Posterior cingulate gyrus (tissue), 11 donors: ENCODE measurements at regions of chr12 and their contacts with region 1.

Region 1: DNA sequence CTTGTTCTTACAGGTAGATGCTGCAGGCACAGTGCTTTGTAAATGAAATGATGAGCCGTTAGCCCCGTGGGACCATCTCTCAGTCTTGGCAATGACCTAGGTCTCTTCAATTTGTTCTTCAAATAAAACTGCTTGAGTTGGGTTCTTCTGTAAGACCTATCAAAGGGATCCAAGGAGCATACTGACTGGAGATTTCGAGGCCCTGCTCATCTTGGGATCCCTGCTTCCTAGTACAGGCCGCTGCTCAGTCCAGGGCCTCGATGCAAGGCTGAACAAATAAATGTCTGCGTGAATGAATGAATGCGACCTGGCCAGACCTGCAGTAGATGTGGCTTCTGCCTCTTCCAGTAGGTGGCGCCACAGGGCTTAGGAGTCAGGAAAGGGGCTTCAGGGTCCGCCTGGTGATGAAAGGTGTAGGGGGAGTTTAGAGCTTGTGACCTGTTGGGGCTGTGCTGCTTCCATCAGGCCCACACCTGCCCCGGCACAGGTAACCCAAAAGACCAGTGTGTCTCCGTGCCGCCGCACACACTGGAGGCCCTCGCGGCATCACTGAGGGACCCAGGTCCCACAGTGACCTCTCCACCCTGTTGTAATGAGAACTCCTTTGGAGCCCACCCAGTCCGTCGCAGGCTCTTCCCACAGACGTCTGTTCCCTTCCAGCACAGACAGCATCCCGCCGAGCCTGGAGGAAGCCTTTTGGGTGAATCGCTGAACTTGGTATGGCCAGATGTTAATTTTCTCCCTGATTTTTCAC is 4.4 kb downstream of the CACNA1C start:
- DNase-seq: peak in 9 of 10 donors; percentile 46 to 92 (median 66)

Region 2: DNA sequence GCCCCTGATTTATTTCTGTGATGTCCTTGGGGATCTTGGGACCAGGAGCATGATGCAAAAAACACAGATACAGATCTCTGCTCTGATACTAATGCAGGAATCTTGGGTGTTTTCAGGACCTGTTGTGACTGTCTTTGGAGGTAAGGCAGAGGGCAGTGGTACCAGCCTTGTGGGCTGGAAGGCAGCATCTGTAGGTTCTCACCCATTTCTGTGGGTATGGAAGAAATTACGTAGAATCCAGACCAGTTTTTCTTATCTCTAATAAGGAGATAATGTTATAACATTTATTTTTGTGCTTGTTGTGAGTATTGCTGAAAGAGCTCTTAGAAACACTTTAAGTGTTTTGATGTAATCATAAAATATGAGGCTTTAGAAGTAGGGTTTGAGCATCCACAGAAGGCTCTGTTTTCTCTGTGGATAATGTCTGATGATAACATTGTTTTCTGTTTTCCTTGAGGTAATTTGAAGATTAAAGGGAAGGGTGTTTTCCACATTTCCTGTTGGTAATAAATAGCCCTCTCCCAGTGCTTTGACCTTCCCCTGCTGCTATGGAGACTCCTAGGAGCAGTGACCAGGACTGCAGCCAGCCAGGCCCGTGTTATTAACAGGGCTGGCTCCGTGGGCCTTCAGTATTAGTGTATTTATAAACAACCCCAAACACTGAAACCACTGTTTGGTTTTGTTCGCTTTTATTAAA is 43.5 kb before region 1 on chr12:
- intact Hi-C with region 1: no loop called
- DNase-seq: peak in 2 of 10 donors; percentile 14 to 17

Region 3: DNA sequence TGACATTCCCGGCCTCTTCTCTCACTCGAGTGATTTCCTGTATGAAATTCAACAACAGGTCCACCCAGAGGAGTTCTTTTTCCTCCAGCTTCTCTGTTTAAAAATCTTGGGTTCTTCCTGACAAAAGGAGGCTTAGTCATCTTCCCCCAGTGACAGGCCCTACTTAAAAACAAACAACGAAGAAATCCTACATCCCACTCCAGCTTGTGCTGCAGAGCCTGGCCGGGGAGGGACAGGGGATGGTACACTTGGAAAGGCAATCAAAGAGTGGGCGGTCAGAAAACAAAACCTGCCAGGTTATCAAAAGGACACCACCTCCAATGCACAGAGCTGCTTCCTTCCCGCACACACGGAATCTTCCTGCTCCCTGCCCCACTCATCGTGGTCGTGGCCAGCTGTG is 96.8 kb after region 1 on chr12:
- intact Hi-C with region 1: loop called (anchors 10 kb)
- DNase-seq: peak in 1 of 10 donors; percentile 88

Region 4: DNA sequence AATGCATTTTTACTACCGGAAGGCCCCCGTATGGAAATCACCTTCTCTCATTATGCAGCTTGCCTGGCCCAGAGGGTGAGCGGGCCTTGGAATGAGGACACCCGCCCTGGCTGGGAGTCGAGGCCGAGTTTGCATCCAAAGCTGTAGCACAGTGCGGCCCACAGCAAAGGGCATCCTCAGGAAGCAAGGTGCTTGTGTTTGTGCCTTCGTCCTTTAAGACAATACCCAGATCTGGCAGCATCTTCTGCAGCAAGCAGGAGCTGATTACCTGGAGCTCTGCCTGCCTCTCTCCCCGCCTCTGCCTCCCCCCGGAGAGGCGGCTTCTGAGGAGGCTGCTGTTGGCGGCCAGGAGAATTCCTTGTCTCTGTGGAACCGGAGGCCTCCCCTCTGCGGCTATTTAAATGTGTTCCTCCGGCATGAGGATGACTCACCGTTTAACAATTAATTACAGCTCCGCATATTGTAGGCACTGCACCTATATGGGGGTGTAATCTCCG is 140.8 kb after region 1 on chr12:
- intact Hi-C with region 1: no loop called
- DNase-seq: peak in 8 of 10 donors; percentile 39 to 93 (median 57)

Region 5: DNA sequence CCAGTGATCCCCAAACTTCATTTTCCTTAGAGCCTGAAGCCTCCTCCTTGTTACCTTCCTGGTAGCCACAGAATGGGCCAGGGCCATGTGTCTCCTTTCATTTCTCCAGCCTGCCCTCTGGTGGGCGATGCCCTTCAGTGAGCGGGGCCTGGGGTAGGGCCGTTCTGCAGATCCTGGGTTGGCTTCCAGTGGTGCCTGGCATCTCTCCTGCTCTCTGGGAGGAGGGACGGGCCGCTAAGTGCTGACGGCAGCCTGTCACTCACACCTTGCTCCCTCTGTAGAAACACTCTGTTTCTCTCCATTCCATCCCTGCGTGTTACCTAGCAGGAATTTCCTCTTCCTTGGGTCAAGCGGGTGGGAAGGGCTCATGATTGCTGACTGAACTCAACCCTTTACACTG is 227.6 kb after region 1 on chr12:
- intact Hi-C with region 1: loop called (anchors 5 kb)
- DNase-seq: peak in 9 of 10 donors; percentile 48 to 93 (median 68)

Region 6: DNA sequence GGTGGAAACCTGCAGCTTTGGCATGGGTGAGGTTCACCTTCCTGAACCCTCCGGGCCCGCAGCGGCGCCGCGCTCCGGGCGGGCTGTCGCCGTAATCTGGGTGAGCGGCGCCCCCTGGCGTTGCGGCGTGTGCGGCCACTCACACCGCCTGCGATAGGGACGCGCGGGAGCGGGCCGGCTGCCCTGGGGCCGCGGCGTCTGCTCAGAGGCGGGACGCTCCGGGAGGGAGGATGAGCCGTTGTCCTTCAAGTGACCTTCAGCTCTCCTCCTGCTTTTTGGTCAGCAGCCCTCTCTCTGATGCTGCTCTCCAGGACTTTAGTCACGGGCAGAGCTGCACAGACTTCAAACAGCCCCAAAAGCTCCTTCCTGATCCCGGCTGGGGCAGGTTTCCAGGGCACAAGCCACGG is 525.9 kb after region 1 on chr12:
- intact Hi-C with region 1: loop called (anchors 5 kb)
- DNase-seq: peak; percentile 26 to 94 (median 58)